ENCODE measurements at regions of chr14 and their contacts with region 1.

Region 1: DNA sequence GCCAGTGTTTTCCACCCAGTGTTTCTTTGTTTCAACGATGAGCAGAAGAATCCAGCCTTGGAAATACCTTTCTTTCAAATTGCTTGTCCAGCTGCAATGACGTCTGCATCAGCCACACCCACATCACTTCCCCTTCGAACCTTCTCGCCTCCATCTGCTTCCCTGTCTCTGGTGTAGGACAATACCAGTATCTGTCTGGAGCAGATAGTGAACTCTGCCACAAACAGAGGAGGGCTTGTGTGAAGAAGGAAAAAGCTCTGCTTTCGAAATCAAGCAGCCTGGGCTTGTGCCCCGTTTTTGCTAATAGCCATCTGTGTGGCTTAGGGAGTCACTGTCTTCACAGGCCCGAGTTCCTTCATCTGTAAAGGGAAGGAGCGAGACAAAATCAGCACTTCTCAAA is 415.4 kb downstream of the ZFP36L1 start:
- DNase-seq: no peak
- ATAC-seq: no peak
- H3K4me3 ChIP-seq: no peak overlapping the region
- H3K27ac ChIP-seq: no peak overlapping the region
- H3K4me1 ChIP-seq: peaks cover 33% of the 10 kb centered on the region
- H3K27me3 ChIP-seq: no peaks in the 10 kb centered on the region
- CTCF ChIP-seq: no peak

Region 2: DNA sequence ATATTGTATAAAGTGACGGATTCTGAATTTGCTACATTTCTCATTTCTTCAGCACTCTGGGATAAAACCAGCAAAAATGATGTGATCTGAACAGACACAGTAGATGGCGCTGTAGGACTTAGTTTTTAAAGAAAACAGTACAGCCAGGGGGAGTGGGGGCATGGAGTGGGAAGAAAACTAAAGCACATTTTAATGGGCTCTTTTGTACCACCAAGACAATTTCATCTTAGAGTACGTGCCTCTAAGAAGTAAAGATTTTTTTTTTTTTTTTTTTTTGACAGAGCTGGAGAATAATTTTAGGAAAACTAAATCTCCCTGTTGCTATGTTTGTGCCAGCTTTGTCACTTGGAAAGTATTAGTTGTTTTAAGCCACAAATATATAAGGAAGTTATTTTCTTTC is 433.5 kb before region 1 on chr14:
- CTCF ChIA-PET with region 1: interaction called, 7 read pairs
- POLR2A ChIA-PET with region 1: no interaction called
- intact Hi-C with region 1: loop called (anchors 2 kb)
- DNase-seq: peak; percentile 93
- ATAC-seq: peak; percentile 29; the same call in 1 of the 2 replicates
- H3K4me3 ChIP-seq: no peak overlapping the region
- H3K27ac ChIP-seq: 0 out of 2 replicates have a peak overlapping the region, but pooled peaks have one; percentile 1
- H3K4me1 ChIP-seq: peaks cover 34% of the 10 kb centered on the region
- H3K27me3 ChIP-seq: no peaks in the 10 kb centered on the region
- CTCF ChIP-seq: peak; percentile 96

Region 3: DNA sequence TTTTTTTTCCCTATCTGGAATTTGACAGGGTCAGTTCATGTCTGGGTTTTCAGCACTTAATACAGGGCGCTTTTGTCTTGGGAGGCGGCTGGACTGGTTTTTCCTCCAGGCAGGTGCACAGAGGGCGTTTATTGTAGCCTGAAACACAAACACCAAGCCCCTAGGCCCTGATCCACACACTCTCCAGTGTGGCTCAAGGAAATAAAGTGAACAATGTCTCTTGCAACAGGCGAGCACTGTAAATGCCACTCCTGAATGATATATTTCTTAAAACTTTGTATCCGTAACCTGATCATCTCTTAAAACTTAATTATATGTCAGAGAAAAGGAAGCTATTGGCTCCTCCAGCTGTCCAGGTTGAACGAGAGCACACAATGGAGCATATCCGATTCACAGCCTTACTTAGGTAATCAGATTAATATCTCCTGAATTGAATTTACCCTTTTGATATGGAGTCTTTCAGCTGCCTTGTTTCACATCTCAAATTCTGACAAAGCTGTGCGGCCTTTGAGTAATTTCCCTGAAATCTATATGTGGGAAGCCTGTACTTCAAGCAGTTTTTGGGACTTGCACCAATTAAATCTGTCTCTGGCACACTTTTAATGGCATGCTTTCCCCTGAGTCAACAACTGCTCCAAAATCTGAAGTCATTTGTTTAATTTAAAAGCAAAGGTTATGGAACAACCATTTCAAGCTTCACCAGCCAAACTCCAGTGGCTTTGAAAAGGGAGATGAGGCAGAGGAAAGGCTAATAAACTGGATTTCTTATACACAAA is 70.3 kb before region 1 on chr14:
- CTCF ChIA-PET with region 1: no interaction called
- POLR2A ChIA-PET with region 1: no interaction called
- intact Hi-C with region 1: loop called (anchors 1 kb)
- DNase-seq: peak; percentile 84
- ATAC-seq: peak; percentile 83
- H3K4me3 ChIP-seq: peak overlapping the region; percentile 4; the same call in 1 of the 2 replicates
- H3K27ac ChIP-seq: peak overlapping the region; percentile 75
- H3K4me1 ChIP-seq: peaks cover 41% of the 10 kb centered on the region
- H3K27me3 ChIP-seq: no peaks in the 10 kb centered on the region
- CTCF ChIP-seq: no peak

Region 4: DNA sequence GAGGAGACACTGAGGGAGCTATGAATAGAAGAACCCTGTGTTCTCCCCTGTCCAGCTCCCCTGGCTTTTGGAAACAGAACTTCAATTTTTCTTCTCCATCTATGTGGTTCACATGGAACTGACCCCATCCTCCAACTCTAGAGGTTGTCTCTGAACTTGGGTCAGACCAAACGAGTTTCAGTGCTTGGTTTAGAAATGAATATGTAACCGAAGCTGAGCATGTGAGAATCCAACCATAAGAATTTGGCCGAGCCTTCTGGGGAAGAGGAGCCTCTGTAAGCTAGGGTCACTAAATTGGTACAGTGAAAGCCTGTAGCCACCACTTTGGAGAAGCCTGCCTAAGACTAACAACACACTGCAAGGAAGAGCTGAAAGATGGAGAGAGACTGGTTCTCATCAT is 49.0 kb before region 1 on chr14:
- CTCF ChIA-PET with region 1: no interaction called
- POLR2A ChIA-PET with region 1: no interaction called
- intact Hi-C with region 1: no loop called
- DNase-seq: no peak
- ATAC-seq: no peak
- H3K4me3 ChIP-seq: no peak overlapping the region
- H3K27ac ChIP-seq: no peak overlapping the region
- H3K4me1 ChIP-seq: no peaks in the 10 kb centered on the region
- H3K27me3 ChIP-seq: no peaks in the 10 kb centered on the region
- CTCF ChIP-seq: no peak

Region 5: DNA sequence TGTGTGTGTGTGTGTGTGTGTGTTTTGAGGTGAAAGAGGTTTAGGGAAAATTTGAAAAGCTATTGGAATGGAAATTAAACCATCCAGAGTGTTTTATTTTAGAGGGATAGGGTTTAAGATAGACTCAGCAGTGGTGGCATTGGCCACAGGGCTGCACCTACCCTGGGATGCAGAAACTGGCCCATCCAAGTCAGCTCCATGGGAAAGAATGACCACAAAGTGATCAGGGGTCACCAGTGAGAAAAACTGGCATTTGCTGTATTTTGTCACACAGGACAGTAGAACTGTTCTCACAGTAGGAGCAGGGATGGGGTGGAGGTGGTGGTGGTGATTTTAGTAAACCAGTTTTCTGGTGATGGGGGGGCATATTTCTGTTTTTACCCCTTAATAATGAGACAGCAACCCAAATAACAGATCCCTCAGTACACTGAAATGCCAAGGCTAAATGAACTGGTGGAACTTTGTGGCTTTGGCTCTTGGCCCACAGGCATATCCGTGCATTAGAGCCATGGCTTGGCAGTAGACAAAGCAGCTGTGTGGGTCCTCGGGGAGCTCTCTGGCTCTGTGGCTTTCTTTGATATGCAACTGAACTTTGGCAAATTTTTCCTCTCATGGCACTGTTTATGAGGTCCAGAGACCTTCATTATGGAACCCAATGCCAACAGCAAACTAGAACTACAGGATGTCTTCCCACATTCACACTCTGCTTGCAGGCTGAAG is 67.2 kb after region 1 on chr14:
- CTCF ChIA-PET with region 1: interaction called, 3 read pairs
- POLR2A ChIA-PET with region 1: no interaction called
- intact Hi-C with region 1: loop called (anchors 1 kb)
- DNase-seq: peak; percentile 64
- ATAC-seq: peak; percentile 44
- H3K4me3 ChIP-seq: no peak overlapping the region
- H3K27ac ChIP-seq: no peak overlapping the region
- H3K4me1 ChIP-seq: peaks cover 42% of the 10 kb centered on the region
- H3K27me3 ChIP-seq: no peaks in the 10 kb centered on the region
- CTCF ChIP-seq: no peak

Region 6: DNA sequence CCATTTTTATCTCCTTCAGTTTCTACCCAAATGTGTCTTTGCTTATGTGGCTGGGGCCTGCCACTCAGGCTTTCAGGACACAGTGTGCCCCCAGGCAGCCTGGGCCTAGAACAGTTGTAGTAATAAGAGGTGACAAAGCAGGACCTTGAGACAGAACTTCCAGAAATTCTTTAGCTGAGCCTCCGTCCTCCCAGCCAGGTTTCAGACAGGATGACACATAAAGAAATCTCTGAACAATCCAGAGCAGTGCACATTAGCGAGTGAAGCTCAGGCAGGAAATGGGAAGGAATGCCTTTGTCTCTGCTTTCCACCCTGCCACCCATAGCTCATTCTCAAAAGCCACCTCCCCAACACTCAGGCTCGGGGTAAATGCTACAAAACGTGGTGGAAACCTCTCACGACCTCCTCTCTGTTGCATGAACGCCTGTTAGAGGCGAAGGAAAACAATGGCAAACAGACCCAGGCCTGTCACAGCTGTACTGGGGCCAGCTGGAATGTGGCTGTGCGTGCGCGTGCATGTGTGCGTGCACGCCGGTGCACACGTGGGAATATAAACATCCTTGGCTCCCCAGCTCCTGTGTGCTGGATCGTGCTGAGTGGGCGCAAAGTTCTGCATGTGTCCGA is 128.7 kb after region 1 on chr14:
- CTCF ChIA-PET with region 1: no interaction called
- POLR2A ChIA-PET with region 1: interaction called, 4 read pairs
- intact Hi-C with region 1: loop called (anchors 1 kb)
- DNase-seq: peak; percentile 71
- ATAC-seq: peak; percentile 72
- H3K4me3 ChIP-seq: no peak overlapping the region
- H3K27ac ChIP-seq: peak overlapping the region; percentile 68
- H3K4me1 ChIP-seq: peaks cover 20% of the 10 kb centered on the region
- H3K27me3 ChIP-seq: no peaks in the 10 kb centered on the region
- CTCF ChIP-seq: no peak

Region 7: DNA sequence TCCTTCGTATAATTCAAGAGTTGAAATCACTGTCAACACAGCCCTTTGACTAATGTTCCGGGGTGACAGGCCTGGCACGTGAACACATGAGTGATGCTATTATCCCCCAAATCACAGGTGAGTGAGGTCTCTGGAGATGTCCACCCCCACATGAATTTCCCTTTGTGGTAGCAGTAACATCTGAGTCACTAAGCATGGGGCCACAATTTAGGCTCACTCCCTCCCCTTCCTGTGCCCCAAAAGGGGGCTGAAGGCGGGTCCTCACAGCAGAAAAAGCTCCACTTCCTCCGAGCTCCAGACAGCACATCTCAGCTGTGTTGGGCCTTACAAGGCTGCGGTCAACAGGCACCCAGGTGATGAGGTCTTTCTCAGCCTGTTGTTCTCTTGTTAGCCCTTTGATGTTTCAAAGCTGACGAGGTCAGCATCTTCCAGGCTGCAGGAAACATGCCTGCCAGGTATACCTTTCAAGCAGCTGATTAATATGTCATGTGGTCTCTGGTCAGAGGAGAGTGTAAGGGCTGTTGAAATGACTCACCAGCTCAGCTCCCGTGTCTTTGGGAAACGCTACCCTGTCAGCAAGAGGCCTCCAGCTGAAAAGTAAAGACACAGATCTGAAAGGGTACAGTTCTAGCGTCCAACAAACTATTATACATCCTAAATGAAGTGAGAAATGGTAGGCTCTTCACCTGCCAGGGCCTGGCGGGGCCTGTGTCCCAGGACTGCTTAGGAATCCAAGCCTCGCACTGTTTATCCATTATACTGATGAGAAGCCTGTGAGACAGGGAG is 308.2 kb after region 1 on chr14:
- CTCF ChIA-PET with region 1: no interaction called
- POLR2A ChIA-PET with region 1: interaction called, 3 read pairs
- intact Hi-C with region 1: loop called (anchors 2 kb)
- DNase-seq: peak; percentile 95
- ATAC-seq: peak; percentile 67
- H3K4me3 ChIP-seq: no peak overlapping the region
- H3K27ac ChIP-seq: peak overlapping the region; percentile 96
- H3K4me1 ChIP-seq: peaks cover 75% of the 10 kb centered on the region
- H3K27me3 ChIP-seq: no peaks in the 10 kb centered on the region
- CTCF ChIP-seq: no peak

Region 8: DNA sequence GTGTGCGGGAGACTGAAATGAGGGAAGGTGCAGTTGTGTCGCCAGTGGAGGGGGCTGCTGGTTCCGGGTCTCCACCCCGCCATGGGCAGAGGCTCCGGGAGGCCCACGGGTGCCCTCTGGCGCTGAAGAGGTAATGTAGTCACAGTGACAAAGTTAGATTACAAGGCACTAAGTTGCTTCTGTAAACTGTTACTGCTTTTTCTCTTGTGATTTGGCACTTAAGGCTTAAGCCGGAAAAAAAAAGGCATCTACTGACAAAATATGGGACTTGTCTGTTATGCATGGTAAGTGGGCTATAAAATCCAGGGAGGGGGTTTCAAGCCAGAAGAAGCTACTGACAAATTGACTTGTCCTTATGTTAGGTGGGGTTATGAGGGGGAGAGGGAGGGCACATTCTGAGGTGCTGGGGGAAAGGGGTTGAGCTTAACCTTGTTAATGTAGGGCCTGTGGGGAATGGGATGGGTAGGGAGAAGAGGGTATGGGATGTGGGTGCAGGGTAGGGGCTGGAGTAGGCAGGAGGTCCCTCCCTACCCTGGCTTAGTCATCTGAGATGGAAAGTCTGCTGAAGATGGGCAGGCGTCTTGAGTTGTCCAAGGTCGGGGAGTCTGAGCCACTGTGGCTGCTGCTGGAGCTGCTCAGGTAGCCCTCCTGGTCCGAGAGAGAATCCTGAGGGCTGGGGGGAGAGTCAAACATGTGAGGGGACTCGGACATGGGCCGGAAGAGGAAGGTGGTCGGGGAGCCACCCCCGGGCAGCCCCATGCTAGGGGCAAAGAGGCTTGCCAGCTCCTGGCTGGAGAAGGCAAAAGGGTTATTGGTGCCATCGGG is 411.7 kb after region 1 on chr14:
- CTCF ChIA-PET with region 1: interaction called, 3 read pairs
- POLR2A ChIA-PET with region 1: interaction called, 29 read pairs
- intact Hi-C with region 1: loop called (anchors 1 kb)
- DNase-seq: peak; percentile 89
- ATAC-seq: peak; percentile 19
- H3K4me3 ChIP-seq: peak overlapping the region; percentile 90
- H3K27ac ChIP-seq: peak overlapping the region; percentile 97
- H3K4me1 ChIP-seq: peaks cover 56% of the 10 kb centered on the region
- H3K27me3 ChIP-seq: no peaks in the 10 kb centered on the region
- CTCF ChIP-seq: peak; percentile 86